ENCODE measurements at regions of chr9 and their contacts with region 1.

Region 1: DNA sequence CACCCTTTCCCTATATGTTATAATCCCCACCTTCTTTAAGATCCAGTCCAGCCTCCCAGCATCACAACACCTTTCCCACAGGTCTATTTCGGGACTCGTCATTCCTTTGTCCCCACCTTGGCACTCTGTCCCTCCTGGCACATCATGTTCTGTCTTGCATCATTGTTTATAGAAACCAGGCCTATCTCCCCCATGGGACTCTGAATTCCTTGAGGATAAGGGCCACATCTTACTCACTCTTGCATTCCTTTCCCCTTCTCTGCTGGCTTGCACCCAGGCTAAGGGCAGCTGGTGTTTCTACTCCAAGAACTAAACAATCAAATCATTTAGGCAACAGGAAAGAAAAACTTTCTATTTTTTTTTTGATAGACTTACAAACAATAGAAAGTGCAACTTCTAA is 205.7 kb downstream of the AGTPBP1 start:
- DNase-seq: peak in 1 of 42 donors; percentile 32

Region 2: GRCh38 chr9:85600675-85601263 is 64.7 kb after region 1 on chr9:
- intact Hi-C with region 1: loop called (anchors 10 kb)
- DNase-seq: no peak

Measured in head of caudate nucleus (tissue), 42 donors.